CD8-positive, alpha-beta memory T cell (primary cell): ENCODE measurements at regions of chr1 and their contacts with region 1.

Region 1: GRCh38 chr1:26284597-26285360 is 4.9 kb downstream of the SH3BGRL3 start:
- DNase-seq: peak; percentile 86 to 97 (median 91)
- H3K4me3 ChIP-seq: peak overlapping the region; percentile 60
- H3K4me3 Mint-ChIP-seq: peak overlapping the region; percentile 68 to 94 (median 87)
- H3K27ac ChIP-seq: peak overlapping the region; percentile 60
- H3K27ac Mint-ChIP-seq: peak overlapping the region; percentile 92 to 100 (median 99)
- H3K4me1 ChIP-seq: peaks cover 93% of the 10 kb centered on the region
- H3K4me1 Mint-ChIP-seq: peaks cover 84 to 93% (median 87%) of the 10 kb centered on the region in 3 donors
- H3K27me3 ChIP-seq: no peaks in the 10 kb centered on the region
- H3K27me3 Mint-ChIP-seq: no peaks in the 10 kb centered on the region

Region 2: GRCh38 chr1:26233903-26234643 is 50.7 kb before region 1 on chr1 and contains the start of gene CEP85:
- CTCF ChIA-PET with region 1: interaction called, 25 read pairs
- POLR2A ChIA-PET with region 1: interaction called, 3 read pairs
- DNase-seq: peak; percentile 97 to 99 (median 98)
- H3K4me3 ChIP-seq: peak within 1 kb of the TSS; percentile 96
- H3K4me3 Mint-ChIP-seq: peak within 1 kb of the TSS; percentile 95 to 99 (median 97)
- H3K27ac ChIP-seq: peak within 1 kb of the TSS; percentile 89
- H3K27ac Mint-ChIP-seq: peak within 1 kb of the TSS; percentile 91 to 98 (median 96)
- H3K4me1 ChIP-seq: peaks cover 29% of the 10 kb centered on the region
- H3K4me1 Mint-ChIP-seq: peaks cover 29 to 38% (median 35%) of the 10 kb centered on the region in 3 donors
- H3K27me3 ChIP-seq: no peaks in the 10 kb centered on the region
- H3K27me3 Mint-ChIP-seq: peaks cover 0 to 5% of the 10 kb centered on the region in 2 donors
- total RNA-seq, gene CEP85: 28.8 to 29.7 TPM

Region 3: DNA sequence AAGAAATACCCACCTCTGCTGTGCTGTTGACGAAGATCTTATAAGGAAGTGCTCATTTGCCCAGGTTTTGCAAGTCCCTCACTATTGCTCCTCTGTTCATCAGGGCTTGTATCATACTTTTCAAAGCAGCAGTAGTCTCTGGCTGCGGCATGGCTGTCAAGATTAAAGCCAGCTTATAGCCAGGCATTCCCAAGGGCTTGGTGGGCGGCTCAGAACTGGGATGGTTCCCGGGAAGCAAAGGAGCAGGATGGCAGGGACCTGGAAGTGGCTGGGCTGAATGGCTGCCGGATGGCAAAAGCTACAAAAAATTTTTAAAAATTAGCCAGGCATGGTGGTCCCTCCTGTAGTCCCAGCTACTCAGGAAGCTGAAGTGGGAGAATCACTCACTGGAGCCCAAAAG is 21.6 kb before region 1 on chr1:
- CTCF ChIA-PET with region 1: no interaction called
- POLR2A ChIA-PET with region 1: no interaction called
- DNase-seq: no peak
- H3K4me3 ChIP-seq: no peak overlapping the region
- H3K4me3 Mint-ChIP-seq: no peak overlapping the region
- H3K27ac ChIP-seq: no peak overlapping the region
- H3K27ac Mint-ChIP-seq: peak overlapping the region in 2 of 8 donors; percentile 38 to 42
- H3K4me1 ChIP-seq: no peaks in the 10 kb centered on the region
- H3K4me1 Mint-ChIP-seq: peaks cover 0 to 5% (median 0%) of the 10 kb centered on the region in 3 donors
- H3K27me3 ChIP-seq: no peaks in the 10 kb centered on the region
- H3K27me3 Mint-ChIP-seq: no peaks in the 10 kb centered on the region

Region 4: GRCh38 chr1:26306290-26307229 is 21.8 kb after region 1 on chr1 and contains the start of gene UBXN11:
- CTCF ChIA-PET with region 1: interaction called, 840 read pairs
- POLR2A ChIA-PET with region 1: interaction called, 28 read pairs
- DNase-seq: peak; percentile 86 to 96 (median 92)
- H3K4me3 ChIP-seq: peak within 1 kb of the TSS; percentile 86
- H3K4me3 Mint-ChIP-seq: peak within 1 kb of the TSS; percentile 86 to 99 (median 97)
- H3K27ac ChIP-seq: peak within 1 kb of the TSS; percentile 77
- H3K27ac Mint-ChIP-seq: peak within 1 kb of the TSS; percentile 85 to 99 (median 98)
- H3K4me1 ChIP-seq: peaks cover 35% of the 10 kb centered on the region
- H3K4me1 Mint-ChIP-seq: peaks cover 26 to 29% (median 29%) of the 10 kb centered on the region in 3 donors
- H3K27me3 ChIP-seq: no peaks in the 10 kb centered on the region
- H3K27me3 Mint-ChIP-seq: no peaks in the 10 kb centered on the region
- total RNA-seq, gene UBXN11: 35.2 to 35.8 TPM

Region 5: GRCh38 chr1:26358411-26359384 is 73.9 kb after region 1 on chr1:
- CTCF ChIA-PET with region 1: interaction called, 28 read pairs
- POLR2A ChIA-PET with region 1: interaction called, 4 read pairs
- DNase-seq: peak; percentile 61 to 87 (median 75)
- H3K4me3 ChIP-seq: peak overlapping the region; percentile 23
- H3K4me3 Mint-ChIP-seq: peak overlapping the region; percentile 60 to 84 (median 69)
- H3K27ac ChIP-seq: no peak overlapping the region
- H3K27ac Mint-ChIP-seq: peak overlapping the region; percentile 61 to 91 (median 78)
- H3K4me1 ChIP-seq: peaks cover 36% of the 10 kb centered on the region
- H3K4me1 Mint-ChIP-seq: peaks cover 44 to 60% (median 47%) of the 10 kb centered on the region in 3 donors
- H3K27me3 ChIP-seq: peaks cover 14% of the 10 kb centered on the region
- H3K27me3 Mint-ChIP-seq: peaks cover 11 to 21% of the 10 kb centered on the region in 2 donors

Region 6: GRCh38 chr1:26373281-26373680 is 88.5 kb after region 1 on chr1:
- CTCF ChIA-PET with region 1: interaction called, 72 read pairs
- POLR2A ChIA-PET with region 1: interaction called, 9 read pairs
- DNase-seq: peak; percentile 27 to 69 (median 51)
- H3K4me3 ChIP-seq: peak overlapping the region; percentile 3
- H3K4me3 Mint-ChIP-seq: peak overlapping the region; percentile 1 to 71 (median 55)
- H3K27ac ChIP-seq: no peak overlapping the region
- H3K27ac Mint-ChIP-seq: peak overlapping the region; percentile 48 to 93 (median 80)
- H3K4me1 ChIP-seq: peaks cover 90% of the 10 kb centered on the region
- H3K4me1 Mint-ChIP-seq: peaks cover 81 to 92% (median 90%) of the 10 kb centered on the region in 3 donors
- H3K27me3 ChIP-seq: no peaks in the 10 kb centered on the region
- H3K27me3 Mint-ChIP-seq: peaks cover 0 to 1% of the 10 kb centered on the region in 2 donors

Region 7: DNA sequence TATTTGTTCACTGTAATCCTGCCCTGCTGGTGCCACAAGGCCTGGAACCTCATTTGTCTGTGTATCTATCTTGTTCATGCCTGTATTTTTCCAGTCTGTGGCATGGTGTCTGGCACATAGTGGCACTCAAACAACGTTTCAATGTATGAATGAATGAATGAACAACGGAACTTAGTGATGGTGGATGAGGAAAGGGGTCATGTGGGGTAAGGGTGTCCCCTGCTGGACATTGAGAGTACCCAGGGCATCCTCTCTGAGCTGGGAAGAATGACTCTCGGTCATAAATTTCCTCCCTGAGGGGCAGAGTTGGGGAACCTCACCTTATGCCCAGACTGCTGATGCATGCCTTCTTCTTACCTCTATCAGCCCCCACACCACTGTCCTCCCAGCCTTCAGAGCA is 106.7 kb after region 1 on chr1:
- CTCF ChIA-PET with region 1: interaction called, 57 read pairs
- POLR2A ChIA-PET with region 1: no interaction called
- DNase-seq: peak in 4 of 5 donors; percentile 24 to 73 (median 46)
- H3K4me3 ChIP-seq: no peak overlapping the region
- H3K4me3 Mint-ChIP-seq: peak overlapping the region in 3 of 7 donors; percentile 0 to 22 (median 18)
- H3K27ac ChIP-seq: no peak overlapping the region
- H3K27ac Mint-ChIP-seq: peak overlapping the region in 4 of 8 donors; percentile 1 to 15 (median 4)
- H3K4me1 ChIP-seq: peaks cover 10% of the 10 kb centered on the region
- H3K4me1 Mint-ChIP-seq: peaks cover 32 to 45% (median 35%) of the 10 kb centered on the region in 3 donors
- H3K27me3 ChIP-seq: no peaks in the 10 kb centered on the region
- H3K27me3 Mint-ChIP-seq: peaks cover 0 to 9% of the 10 kb centered on the region in 2 donors